Sigmoid colon (tissue), 7 donors: ENCODE measurements at regions of chr1 and their contacts with region 1.

Region 1: DNA sequence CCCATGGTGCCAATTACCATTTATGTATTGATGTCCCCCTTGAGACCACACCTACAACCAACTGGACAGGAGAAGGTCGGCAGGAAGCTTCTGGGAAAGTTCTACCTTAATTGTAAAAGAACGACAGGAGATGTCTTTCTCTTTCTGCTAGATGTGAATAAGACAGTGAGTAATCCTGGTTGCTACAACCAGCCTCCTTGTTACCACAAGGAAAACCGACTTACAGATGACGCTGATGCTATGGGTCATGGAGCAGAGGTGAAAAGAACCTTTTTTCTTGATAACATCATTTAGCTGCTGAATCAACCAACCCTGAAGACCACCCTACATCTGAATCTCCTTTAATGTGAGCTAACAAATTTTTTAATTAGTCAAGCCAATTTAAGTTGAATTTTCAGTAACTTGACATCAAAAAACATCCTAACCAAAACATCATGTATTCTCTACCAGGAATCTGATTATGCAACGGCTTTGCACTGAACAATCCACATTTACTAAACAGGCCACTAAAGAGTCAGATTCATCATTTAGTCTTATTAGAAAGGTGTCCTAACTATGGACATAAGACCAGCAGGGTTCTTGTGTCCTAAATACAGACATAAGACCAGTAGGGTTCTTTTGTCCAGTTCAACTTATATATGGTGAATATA is 23.0 kb downstream of the RGS2 start:
- DNase-seq: no peak
- H3K4me3 ChIP-seq: no peak overlapping the region
- H3K27ac ChIP-seq: no peak overlapping the region
- H3K4me1 ChIP-seq: peaks cover 0 to 43% (median 31%) of the 10 kb centered on the region in 4 donors
- H3K27me3 ChIP-seq: no peaks in the 10 kb centered on the region
- CTCF ChIP-seq: no peak
- EP300 ChIP-seq: no peak
- POLR2A ChIP-seq: no peak

Region 2: GRCh38 chr1:192866241-192866868 is 34.5 kb after region 1 on chr1:
- intact Hi-C with region 1: no loop called
- DNase-seq: no peak
- H3K4me3 ChIP-seq: no peak overlapping the region
- H3K27ac ChIP-seq: no peak overlapping the region
- H3K4me1 ChIP-seq: no peaks in the 10 kb centered on the region
- H3K27me3 ChIP-seq: no peaks in the 10 kb centered on the region
- CTCF ChIP-seq: no peak
- EP300 ChIP-seq: no peak
- POLR2A ChIP-seq: no peak

Region 3: GRCh38 chr1:192877288-192877886 is 45.6 kb after region 1 on chr1:
- intact Hi-C with region 1: loop called (anchors 5 kb)
- DNase-seq: no peak
- H3K4me3 ChIP-seq: no peak overlapping the region
- H3K27ac ChIP-seq: peak overlapping the region in 3 of 4 donors; percentile 69 to 74 (median 72)
- H3K4me1 ChIP-seq: peaks cover 0 to 36% (median 23%) of the 10 kb centered on the region in 4 donors
- H3K27me3 ChIP-seq: no peaks in the 10 kb centered on the region
- CTCF ChIP-seq: no peak
- EP300 ChIP-seq: no peak
- POLR2A ChIP-seq: no peak